ENCODE measurements at regions of chr3 and their contacts with region 1.

Region 1: DNA sequence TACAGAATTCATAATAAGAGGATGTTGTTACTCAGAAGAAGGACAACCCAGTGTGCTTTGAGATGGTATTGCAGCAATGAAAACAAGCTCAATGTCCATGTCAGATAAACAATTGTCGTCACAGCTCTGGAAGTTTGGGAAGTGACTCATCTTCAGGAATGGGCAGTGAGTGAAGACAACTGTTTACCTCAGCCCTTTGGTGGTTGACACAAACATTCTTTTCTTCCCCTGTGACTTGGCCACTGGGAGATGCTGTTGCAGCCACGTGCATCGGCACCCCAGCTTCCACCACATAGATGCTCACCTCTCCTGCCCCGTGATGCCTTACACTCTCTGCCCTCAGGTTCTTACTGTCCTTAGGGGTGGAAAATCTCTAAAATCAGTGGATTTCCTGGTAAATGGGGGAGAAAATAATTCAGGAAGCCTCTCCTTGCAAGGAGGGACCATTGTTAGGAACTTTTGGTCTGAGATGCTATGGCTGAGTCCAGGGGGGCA is 114.1 kb upstream of the GALNT15 start:
- DNase-seq: peak; percentile 98
- H3K4me3 Mint-ChIP-seq: peak overlapping the region; percentile 30
- H3K27ac Mint-ChIP-seq: peak overlapping the region; percentile 96
- H3K4me1 Mint-ChIP-seq: peaks cover 66% of the 10 kb centered on the region
- H3K27me3 Mint-ChIP-seq: no peaks in the 10 kb centered on the region
- CTCF ChIP-seq: no peak

Region 2: GRCh38 chr3:15159501-15160136 is 900.8 kb before region 1 on chr3:
- CTCF ChIA-PET with region 1: no interaction called
- POLR2A ChIA-PET with region 1: no interaction called
- intact Hi-C with region 1: no loop called
- DNase-seq: no peak
- H3K4me3 Mint-ChIP-seq: no peak overlapping the region
- H3K27ac Mint-ChIP-seq: no peak overlapping the region
- H3K4me1 Mint-ChIP-seq: peaks cover 6% of the 10 kb centered on the region
- H3K27me3 Mint-ChIP-seq: peaks cover 37% of the 10 kb centered on the region
- CTCF ChIP-seq: no peak

Region 3: GRCh38 chr3:15629860-15630597 is 430.4 kb before region 1 on chr3:
- CTCF ChIA-PET with region 1: interaction called, 3 read pairs
- POLR2A ChIA-PET with region 1: no interaction called
- intact Hi-C with region 1: loop called (anchors 5 kb)
- DNase-seq: peak; percentile 90
- H3K4me3 Mint-ChIP-seq: peak overlapping the region; percentile 50
- H3K27ac Mint-ChIP-seq: peak overlapping the region; percentile 67
- H3K4me1 Mint-ChIP-seq: peaks cover 35% of the 10 kb centered on the region
- H3K27me3 Mint-ChIP-seq: no peaks in the 10 kb centered on the region
- CTCF ChIP-seq: peak; percentile 72

Region 4: DNA sequence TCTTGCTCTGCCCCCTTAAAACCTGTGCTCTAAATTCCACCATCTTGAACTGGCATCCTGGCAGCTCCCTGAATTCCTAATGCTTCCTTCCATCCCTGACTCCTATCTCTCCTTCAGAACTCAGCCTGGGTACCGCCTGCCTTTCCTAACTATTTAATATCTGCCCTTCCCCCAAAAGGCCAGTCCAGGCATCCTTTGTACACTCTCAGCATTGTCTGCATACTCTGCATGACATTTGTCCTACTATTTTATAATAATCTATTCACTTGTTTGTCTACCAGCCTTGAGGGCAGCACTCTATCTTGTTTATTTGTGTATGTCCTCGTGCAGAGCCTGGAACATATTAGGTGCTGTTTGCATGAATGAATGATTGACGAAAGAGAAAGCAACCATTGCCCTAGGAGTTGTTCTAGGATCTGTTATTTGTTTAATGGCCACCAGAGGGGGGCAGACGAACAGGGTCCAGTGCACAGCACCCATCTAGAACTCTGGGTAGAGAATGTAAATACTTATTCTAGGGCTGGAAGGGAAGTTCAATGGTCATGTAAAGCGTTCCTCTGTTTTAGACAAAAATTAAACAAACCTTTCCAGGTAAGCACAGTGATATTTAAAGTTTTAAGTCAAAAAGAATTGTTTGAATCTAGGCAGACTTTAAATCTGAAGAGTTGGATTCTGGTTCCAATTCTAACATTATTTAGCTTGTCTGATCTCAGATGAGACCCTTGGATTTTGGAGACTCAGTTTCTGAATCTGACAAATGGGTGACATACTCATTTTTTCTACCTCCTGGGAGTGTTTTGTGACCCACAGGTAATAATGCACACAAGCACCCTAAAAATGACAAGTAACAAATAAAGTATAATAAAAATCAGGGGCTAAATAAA is 11.7 kb before region 1 on chr3:
- CTCF ChIA-PET with region 1: interaction called, 62 read pairs
- POLR2A ChIA-PET with region 1: interaction called, 13 read pairs
- intact Hi-C with region 1: loop called (anchors 1 kb)
- DNase-seq: peak; percentile 84
- H3K4me3 Mint-ChIP-seq: no peak overlapping the region
- H3K27ac Mint-ChIP-seq: peak overlapping the region; percentile 3
- H3K4me1 Mint-ChIP-seq: peaks cover 15% of the 10 kb centered on the region
- H3K27me3 Mint-ChIP-seq: no peaks in the 10 kb centered on the region
- CTCF ChIP-seq: peak; percentile 72

Region 5: GRCh38 chr3:16102905-16103364 is 42.5 kb after region 1 on chr3:
- CTCF ChIA-PET with region 1: no interaction called
- POLR2A ChIA-PET with region 1: interaction called, 12 read pairs
- intact Hi-C with region 1: loop called (anchors 2 kb)
- DNase-seq: no peak
- H3K4me3 Mint-ChIP-seq: no peak overlapping the region
- H3K27ac Mint-ChIP-seq: peak overlapping the region; percentile 82
- H3K4me1 Mint-ChIP-seq: peaks cover 22% of the 10 kb centered on the region
- H3K27me3 Mint-ChIP-seq: no peaks in the 10 kb centered on the region
- CTCF ChIP-seq: no peak

Region 6: DNA sequence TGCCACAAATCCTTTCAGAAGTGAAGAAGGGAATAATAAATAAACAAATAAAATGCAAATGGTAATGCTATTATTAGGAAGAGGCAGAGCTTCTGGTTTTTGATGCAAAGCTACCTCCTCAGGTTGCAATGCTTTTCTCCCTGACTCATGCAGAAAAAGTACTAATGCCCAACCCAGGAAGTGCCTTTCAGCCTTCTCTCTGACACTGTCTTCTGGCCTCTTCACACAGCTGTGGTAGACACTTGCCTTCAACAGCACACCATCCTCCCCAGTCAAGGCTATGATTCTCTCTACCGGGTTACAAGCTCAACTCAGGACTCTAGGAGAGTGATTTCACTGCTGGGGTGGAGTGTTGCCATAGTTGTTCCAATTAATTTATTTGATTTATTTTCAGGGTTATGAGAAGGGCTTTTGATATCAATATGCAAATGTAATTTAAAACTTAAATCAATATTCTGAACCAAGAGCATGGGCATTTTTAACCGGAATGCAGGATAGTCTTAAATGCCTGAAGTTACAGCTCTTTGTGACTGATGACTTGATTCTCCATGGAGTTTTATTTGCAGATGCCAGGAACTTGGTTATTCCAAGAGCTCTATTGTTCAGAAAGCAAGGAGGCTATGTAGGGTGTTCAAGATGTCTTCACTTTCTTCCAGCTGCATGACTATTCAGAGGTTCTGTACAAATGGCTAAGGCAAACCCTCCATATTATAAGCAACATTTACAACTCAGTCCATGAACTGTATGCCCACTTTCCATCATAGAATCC is 87.0 kb after region 1 on chr3:
- CTCF ChIA-PET with region 1: interaction called, 3 read pairs
- POLR2A ChIA-PET with region 1: interaction called, 10 read pairs
- intact Hi-C with region 1: no loop called
- DNase-seq: peak; percentile 54
- H3K4me3 Mint-ChIP-seq: no peak overlapping the region
- H3K27ac Mint-ChIP-seq: peak overlapping the region; percentile 86
- H3K4me1 Mint-ChIP-seq: peaks cover 35% of the 10 kb centered on the region
- H3K27me3 Mint-ChIP-seq: no peaks in the 10 kb centered on the region
- CTCF ChIP-seq: no peak

Region 7: DNA sequence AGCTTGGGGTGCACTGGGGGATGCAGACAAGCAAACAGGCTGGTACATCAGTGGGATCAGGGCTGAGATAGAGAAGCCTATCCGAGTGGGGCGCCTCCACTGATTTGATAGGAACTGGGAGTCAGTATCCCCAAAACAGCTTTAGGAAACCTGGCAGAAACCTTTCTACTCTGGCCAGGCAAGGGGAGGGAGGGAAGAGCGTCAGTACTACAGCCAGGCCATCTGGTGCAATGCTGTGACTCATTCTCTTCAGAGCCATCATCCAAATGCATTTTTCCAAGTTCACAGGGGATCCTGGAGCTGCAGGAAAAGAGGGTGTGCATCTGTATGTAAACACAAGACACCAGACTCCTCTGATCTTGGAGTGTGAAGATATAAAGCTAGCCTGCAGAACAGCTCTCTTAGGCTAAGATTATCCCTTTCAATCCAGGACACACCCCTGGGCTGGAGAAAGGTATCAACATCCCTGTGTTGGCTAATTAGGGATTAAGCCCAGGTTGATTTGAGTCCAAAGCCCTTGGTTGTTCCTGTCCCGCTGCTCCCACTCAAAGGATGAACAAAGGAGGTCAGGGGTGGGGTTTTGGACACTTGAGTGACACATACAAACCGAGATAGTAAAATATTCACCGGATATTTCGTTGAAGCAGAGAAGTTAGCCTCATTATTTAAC is 123.3 kb after region 1 on chr3:
- CTCF ChIA-PET with region 1: interaction called, 18 read pairs
- POLR2A ChIA-PET with region 1: interaction called, 13 read pairs
- intact Hi-C with region 1: loop called (anchors 1 kb)
- DNase-seq: peak; percentile 82
- H3K4me3 Mint-ChIP-seq: no peak overlapping the region
- H3K27ac Mint-ChIP-seq: peak overlapping the region; percentile 26
- H3K4me1 Mint-ChIP-seq: peaks cover 37% of the 10 kb centered on the region
- H3K27me3 Mint-ChIP-seq: no peaks in the 10 kb centered on the region
- CTCF ChIP-seq: no peak

Region 8: GRCh38 chr3:16264708-16265454 is 204.5 kb after region 1 on chr3 and contains the starts of genes DPH3 and OXNAD1:
- CTCF ChIA-PET with region 1: no interaction called
- POLR2A ChIA-PET with region 1: interaction called, 20 read pairs
- intact Hi-C with region 1: no loop called
- DNase-seq: peak; percentile 100
- H3K4me3 Mint-ChIP-seq: peak within 1 kb of the TSS; percentile 95
- H3K27ac Mint-ChIP-seq: peak within 1 kb of the TSS; percentile 96
- H3K4me1 Mint-ChIP-seq: peaks cover 19% of the 10 kb centered on the region
- H3K27me3 Mint-ChIP-seq: no peaks in the 10 kb centered on the region
- CTCF ChIP-seq: no peak
- total RNA-seq, gene DPH3: 30.5 and 39.8 TPM in 2 replicates
- total RNA-seq, gene OXNAD1: 19.0 and 27.6 TPM in 2 replicates

Measured in MCF 10A (cell line).